H1 (cell line): ENCODE measurements at regions of chr9 and their contacts with region 1.

Region 1: DNA sequence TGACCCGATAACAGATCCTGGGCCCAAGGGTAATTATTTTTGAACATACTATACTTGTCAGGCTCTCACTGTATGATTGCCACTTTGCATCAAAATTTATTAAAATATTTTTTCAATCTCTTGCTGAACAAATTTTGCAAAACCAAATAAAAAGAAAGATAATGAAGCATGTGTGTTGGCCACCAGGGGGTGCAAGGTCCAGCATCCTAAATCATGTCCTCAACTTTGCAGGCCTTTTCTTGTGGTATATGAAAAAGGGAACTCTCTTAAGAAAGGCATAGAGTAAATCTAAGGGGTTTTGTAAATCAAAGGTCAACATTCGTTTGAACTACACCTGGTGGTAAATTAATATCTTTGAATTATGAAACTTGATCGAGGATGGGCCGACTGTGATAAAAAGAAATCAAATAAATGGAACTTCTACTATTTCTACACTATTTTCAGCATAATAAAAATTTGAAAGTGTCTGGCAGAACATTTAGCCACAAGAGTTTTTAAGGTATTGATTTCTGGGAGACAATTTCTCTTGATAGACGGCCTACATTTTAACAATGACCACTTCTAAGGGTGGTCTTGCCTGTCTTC is 676.5 kb downstream of the DMRTA1 start:
- DNase-seq: peak; percentile 15 to 50
- H3K4me3 ChIP-seq: no peak overlapping the region
- H3K27ac ChIP-seq: no peak overlapping the region
- H3K4me1 ChIP-seq: no peaks in the 10 kb centered on the region
- H3K27me3 ChIP-seq: no peaks in the 10 kb centered on the region
- CTCF ChIP-seq: peak; percentile 20 to 66 (median 55); a peak in 3 of 4 replicates
- EP300 ChIP-seq: no peak
- POLR2A ChIP-seq: no peak
- RAD21 ChIP-seq: peak; percentile 75

Region 2: GRCh38 chr9:23372703-23373102 is 249.6 kb after region 1 on chr9:
- CTCF ChIA-PET with region 1: no interaction called
- POLR2A ChIA-PET with region 1: no interaction called
- DNase-seq: no peak
- H3K4me3 ChIP-seq: no peak overlapping the region
- H3K27ac ChIP-seq: no peak overlapping the region
- H3K4me1 ChIP-seq: no peaks in the 10 kb centered on the region
- H3K27me3 ChIP-seq: no peaks in the 10 kb centered on the region
- CTCF ChIP-seq: no peak
- EP300 ChIP-seq: no peak
- POLR2A ChIP-seq: no peak
- RAD21 ChIP-seq: no peak

Region 3: DNA sequence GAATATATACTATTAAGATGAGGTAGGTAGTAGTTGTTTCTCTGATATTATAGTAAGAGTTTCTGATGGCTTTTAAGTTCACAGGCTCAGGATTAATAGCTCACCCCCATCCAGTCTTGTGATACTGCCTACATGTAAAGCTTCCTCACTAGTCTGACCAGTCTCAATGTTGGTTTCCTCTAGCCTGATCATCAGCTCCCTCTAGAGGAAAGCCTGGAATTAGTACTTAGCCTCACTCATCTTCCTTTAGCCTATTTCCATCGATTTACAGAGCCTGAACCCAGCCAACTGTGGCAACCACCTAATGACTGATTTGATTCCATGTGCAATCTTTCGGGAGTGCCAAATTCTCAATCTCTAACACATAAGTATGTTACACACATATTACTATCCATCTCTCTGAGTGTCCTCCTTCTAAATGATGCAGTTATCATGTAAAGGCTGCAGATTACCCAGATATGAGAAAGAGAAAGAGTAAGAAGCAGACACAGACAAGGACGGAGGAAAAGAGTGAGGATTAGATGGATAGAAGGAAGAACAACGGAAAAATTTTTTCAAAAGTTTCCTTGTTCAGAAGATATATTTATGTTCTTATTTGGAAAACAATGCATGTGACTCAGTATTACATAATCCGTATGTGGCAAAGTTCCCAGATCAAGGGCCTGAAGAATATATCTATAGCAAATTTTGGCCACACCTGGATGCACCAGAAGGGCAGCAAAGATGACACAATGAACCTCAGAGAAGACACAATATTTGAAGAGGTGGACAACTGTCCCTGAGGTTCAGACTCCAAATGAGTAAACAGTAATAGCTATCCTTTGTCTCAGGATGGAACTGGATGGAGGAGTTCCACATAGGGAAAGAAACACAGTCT is 369.2 kb after region 1 on chr9:
- CTCF ChIA-PET with region 1: interaction called, 28 read pairs
- POLR2A ChIA-PET with region 1: no interaction called
- DNase-seq: peak in 1 of 2 experiments; percentile 15
- H3K4me3 ChIP-seq: no peak overlapping the region
- H3K27ac ChIP-seq: no peak overlapping the region
- H3K4me1 ChIP-seq: no peaks in the 10 kb centered on the region
- H3K27me3 ChIP-seq: no peaks in the 10 kb centered on the region
- CTCF ChIP-seq: peak in 2 of 3 experiments; percentile 77 to 83; a peak in 3 of 4 replicates
- EP300 ChIP-seq: no peak
- POLR2A ChIP-seq: no peak
- RAD21 ChIP-seq: peak; percentile 94 to 95